ENCODE measurements at regions of chr2 and their contacts with region 1.

Region 1: GRCh38 chr2:208872591-208872990 is 466.0 kb downstream of the PTH2R start:
- DNase-seq: no peak
- ATAC-seq: no peak
- H3K4me3 ChIP-seq: no peak overlapping the region
- H3K27ac ChIP-seq: no peak overlapping the region
- H3K4me1 ChIP-seq: no peaks in the 10 kb centered on the region
- H3K27me3 ChIP-seq: no peaks in the 10 kb centered on the region
- CTCF ChIP-seq: no peak
- POLR2A ChIP-seq: no peak
- RAD21 ChIP-seq: no peak

Region 2: GRCh38 chr2:209534228-209534627 is 661.6 kb after region 1 on chr2:
- CTCF ChIA-PET with region 1: no interaction called
- POLR2A ChIA-PET with region 1: no interaction called
- dilution Hi-C with region 1: no loop called
- in situ Hi-C with region 1: no loop called
- intact Hi-C with region 1: loop called (anchors 10 kb)
- DNase-seq: no peak
- ATAC-seq: no peak
- H3K4me3 ChIP-seq: no peak overlapping the region
- H3K27ac ChIP-seq: no peak overlapping the region
- H3K4me1 ChIP-seq: no peaks in the 10 kb centered on the region
- H3K27me3 ChIP-seq: no peaks in the 10 kb centered on the region; the same call in 1 of the 2 replicates
- CTCF ChIP-seq: no peak
- POLR2A ChIP-seq: no peak
- RAD21 ChIP-seq: no peak

Measured in IMR-90 (cell line).